Activated CD4-positive, alpha-beta memory T cell treated with anti-CD3 and anti-CD28 coated beads for 36 hours (primary cell): ENCODE measurements at regions of chr6 and their contacts with region 1.

Region 1: GRCh38 chr6:16712931-16713484 is 48.3 kb downstream of the ATXN1 start:
- DNase-seq: peak; percentile 62
- H3K4me3 Mint-ChIP-seq: peak overlapping the region; percentile 64
- H3K27ac Mint-ChIP-seq: peak overlapping the region; percentile 92
- H3K4me1 Mint-ChIP-seq: peaks cover 70% of the 10 kb centered on the region
- H3K27me3 Mint-ChIP-seq: no peaks in the 10 kb centered on the region

Region 2: GRCh38 chr6:16533721-16534136 is 179.3 kb before region 1 on chr6:
- CTCF ChIA-PET with region 1: no interaction called
- POLR2A ChIA-PET with region 1: no interaction called
- intact Hi-C with region 1: loop called (anchors 1 kb)
- DNase-seq: no peak
- H3K4me3 Mint-ChIP-seq: no peak overlapping the region
- H3K27ac Mint-ChIP-seq: peak overlapping the region; percentile 77
- H3K4me1 Mint-ChIP-seq: peaks cover 43% of the 10 kb centered on the region
- H3K27me3 Mint-ChIP-seq: no peaks in the 10 kb centered on the region

Region 3: DNA sequence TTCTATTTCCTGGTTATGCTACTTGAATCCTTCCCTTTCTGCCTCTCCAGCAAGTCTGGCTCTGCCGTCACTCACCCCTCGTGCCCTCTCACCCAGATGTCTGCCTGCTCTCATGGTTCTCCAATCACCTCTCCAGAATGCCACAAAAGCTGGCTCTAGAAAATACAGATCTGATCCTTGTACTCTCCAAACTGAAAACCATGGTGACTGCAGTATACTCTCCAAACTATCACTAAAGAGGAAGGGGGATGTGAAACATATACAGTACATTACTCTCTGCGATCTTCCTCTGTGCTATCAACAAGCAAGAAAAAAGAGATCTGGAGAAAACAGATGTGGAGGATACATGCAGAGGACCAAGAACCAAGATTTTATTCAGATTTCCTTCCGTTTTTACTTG is 42.8 kb before region 1 on chr6:
- CTCF ChIA-PET with region 1: interaction called, 4 read pairs
- POLR2A ChIA-PET with region 1: no interaction called
- intact Hi-C with region 1: loop called (anchors 1 kb)
- DNase-seq: no peak
- H3K4me3 Mint-ChIP-seq: peak overlapping the region; percentile 33
- H3K27ac Mint-ChIP-seq: peak overlapping the region; percentile 87
- H3K4me1 Mint-ChIP-seq: peaks cover 81% of the 10 kb centered on the region
- H3K27me3 Mint-ChIP-seq: no peaks in the 10 kb centered on the region

Region 4: GRCh38 chr6:16698997-16699868 is 13.8 kb before region 1 on chr6:
- CTCF ChIA-PET with region 1: interaction called, 19 read pairs
- POLR2A ChIA-PET with region 1: interaction called, 29 read pairs
- intact Hi-C with region 1: loop called (anchors 1 kb)
- DNase-seq: peak; percentile 53
- H3K4me3 Mint-ChIP-seq: peak overlapping the region; percentile 78
- H3K27ac Mint-ChIP-seq: peak overlapping the region; percentile 89
- H3K4me1 Mint-ChIP-seq: peaks cover 75% of the 10 kb centered on the region
- H3K27me3 Mint-ChIP-seq: no peaks in the 10 kb centered on the region

Region 5: GRCh38 chr6:16731478-16732051 is 18.6 kb after region 1 on chr6:
- CTCF ChIA-PET with region 1: interaction called, 5 read pairs
- POLR2A ChIA-PET with region 1: interaction called, 10 read pairs
- intact Hi-C with region 1: loop called (anchors 1 kb)
- DNase-seq: peak; percentile 62
- H3K4me3 Mint-ChIP-seq: peak overlapping the region; percentile 29
- H3K27ac Mint-ChIP-seq: peak overlapping the region; percentile 64
- H3K4me1 Mint-ChIP-seq: peaks cover 81% of the 10 kb centered on the region
- H3K27me3 Mint-ChIP-seq: no peaks in the 10 kb centered on the region

Region 6: DNA sequence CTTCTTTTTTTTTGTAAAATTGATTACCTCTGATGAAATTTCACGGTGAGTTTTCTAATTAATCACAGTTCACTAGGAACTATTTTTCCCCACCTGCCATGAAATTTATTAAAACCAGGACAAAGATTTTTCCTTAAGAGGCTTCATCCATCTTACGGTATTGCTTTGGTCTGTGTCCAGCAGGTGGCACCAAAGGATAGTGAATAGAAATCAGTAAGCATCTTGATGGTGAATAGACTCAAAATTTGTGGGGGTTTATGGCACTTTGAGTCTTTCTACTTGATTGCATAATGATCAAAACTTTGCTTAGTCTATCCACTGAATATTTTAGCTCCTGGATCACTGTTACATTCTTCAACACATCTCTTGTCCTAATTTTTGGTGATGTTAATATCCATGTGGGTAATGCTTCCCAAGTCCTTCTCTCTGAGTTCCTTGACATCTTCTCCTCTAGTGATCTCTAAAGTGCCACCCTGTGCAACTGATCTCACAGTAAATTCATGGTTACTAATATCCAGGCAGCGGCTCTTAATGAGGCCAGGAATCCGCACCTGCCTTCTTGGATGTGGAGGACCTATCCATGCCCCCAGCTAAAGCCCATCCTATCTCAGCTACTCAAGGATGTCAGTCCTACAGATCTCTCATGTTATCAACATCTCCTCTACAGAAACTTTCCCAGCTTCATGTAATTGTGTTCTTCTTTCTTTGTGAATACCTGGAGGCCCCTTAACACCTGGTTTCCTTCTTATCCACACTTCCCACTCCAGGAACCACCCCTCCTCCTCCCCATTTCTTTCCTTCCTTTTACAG is 443.3 kb after region 1 on chr6:
- CTCF ChIA-PET with region 1: no interaction called
- POLR2A ChIA-PET with region 1: no interaction called
- intact Hi-C with region 1: no loop called
- DNase-seq: peak; percentile 53
- H3K4me3 Mint-ChIP-seq: no peak overlapping the region
- H3K27ac Mint-ChIP-seq: no peak overlapping the region
- H3K4me1 Mint-ChIP-seq: no peaks in the 10 kb centered on the region
- H3K27me3 Mint-ChIP-seq: peaks cover 8% of the 10 kb centered on the region